ENCODE measurements at regions of chr2 and their contacts with region 1.

Region 1: DNA sequence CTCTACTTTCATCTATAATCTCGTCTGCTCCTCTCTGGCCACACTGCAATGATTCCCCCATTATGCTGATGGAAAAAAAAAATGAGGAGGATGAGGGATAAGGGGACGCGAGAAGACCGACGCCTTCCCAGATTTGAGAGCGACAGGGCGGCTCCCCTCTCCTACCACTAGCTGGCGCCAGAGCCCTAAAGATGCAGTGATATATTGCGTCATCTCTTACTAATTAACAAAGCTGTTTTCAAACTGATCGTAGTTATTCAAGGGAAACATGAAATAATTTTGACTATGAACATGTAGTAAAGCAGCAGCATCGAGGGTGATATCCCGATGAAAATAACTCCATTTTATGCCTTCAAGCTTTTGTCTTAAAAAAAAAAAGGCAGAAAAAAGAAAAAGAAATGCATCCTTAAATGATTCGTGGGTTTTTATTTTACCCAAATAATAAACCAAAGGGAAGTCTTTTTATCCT is 48.0 kb upstream of the HNRNPA3 start:
- DNase-seq: peak; percentile 60
- CTCF ChIP-seq: peak; percentile 98

Region 2: DNA sequence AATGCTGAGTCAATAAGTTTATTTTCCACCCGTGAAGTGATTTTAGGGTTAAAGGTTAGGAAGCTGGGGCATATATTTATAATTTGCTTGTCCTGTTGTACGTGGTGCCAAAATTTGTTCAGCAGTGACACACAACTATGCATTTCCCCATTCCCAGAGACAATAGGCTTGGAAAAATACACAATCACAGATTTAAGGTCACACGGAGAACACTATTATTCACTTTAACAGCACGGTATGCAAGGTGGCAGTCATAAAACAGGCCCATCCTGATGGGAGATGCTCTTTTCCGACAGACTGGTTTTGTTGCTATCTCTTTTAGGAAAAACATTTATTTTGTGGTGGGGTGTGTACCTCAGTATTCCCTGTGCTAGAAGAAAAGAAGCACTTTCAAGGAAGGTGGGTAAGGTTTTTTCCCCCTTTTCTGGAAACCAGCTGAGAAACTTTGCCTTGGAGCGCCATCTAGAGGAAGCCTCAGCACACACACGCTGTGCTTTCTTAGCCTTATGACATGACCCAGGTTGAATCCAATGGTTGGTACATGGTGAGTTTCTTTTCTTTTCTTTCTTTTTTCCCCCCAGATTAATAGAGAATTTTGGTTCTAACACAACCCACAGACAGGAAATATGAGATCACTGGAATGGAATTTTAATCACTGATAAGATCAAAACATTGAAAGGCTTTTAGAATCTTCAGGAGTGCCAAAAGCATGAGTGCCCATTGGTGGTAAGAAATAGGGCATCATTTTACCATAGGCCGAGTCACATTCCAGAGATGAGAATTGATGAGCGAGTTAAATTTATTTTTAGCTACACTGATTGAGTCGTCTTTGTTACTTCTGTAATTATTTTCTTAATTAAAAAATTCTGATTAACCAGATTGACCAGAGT is 560.0 kb after region 1 on chr2:
- in situ Hi-C with region 1: loop called (anchors 25 kb)
- DNase-seq: peak; percentile 35
- CTCF ChIP-seq: peak; percentile 85

Measured in GM13976 (cell line).